Esophagus muscularis mucosa (tissue), 4 donors: ENCODE measurements at regions of chr15 and their contacts with region 1.

Region 1: DNA sequence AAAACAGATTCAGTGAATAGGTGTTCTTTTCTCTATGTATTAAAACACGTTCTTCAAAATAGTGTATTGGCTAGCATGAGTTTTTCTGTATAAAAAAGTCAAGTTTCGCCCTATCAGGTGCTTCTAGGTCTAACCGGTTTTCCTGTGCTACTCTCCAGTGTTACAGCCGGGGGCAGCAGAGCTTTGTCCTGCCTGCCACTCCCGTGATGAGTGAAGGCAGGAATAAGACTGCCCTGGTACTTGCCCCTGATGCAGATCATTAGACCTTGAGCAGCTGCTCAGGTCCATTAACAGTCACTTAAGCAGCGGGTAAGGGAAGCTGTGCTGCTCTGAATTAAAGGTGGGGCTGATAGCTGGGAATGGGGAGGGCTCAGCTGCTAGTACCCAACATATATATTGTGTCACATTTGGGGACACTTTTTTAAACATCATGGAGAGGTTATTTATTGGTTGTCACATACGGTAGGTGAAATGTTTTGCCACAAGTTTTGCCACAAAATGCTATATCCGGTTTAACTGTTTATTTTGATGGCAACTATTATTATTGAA is 1.3 kb upstream of the UNC13C start:
- DNase-seq: no peak
- H3K4me3 ChIP-seq: no peak overlapping the region
- H3K27ac ChIP-seq: no peak overlapping the region
- H3K4me1 ChIP-seq: peaks cover 0 to 18% (median 16%) of the 10 kb centered on the region in 4 donors
- H3K27me3 ChIP-seq: no peaks in the 10 kb centered on the region
- CTCF ChIP-seq: peak; percentile 18 to 28 (median 27)
- EP300 ChIP-seq: no peak
- POLR2A ChIP-seq: no peak

Region 2: GRCh38 chr15:54082836-54083492 is 106.0 kb after region 1 on chr15:
- intact Hi-C with region 1: loop called (anchors 10 kb)
- DNase-seq: no peak
- H3K4me3 ChIP-seq: no peak overlapping the region
- H3K27ac ChIP-seq: no peak overlapping the region
- H3K4me1 ChIP-seq: no peaks in the 10 kb centered on the region
- H3K27me3 ChIP-seq: no peaks in the 10 kb centered on the region
- CTCF ChIP-seq: peak; percentile 31 to 59 (median 41)
- EP300 ChIP-seq: no peak
- POLR2A ChIP-seq: no peak